Gastrocnemius medialis (tissue), 4 donors: ENCODE measurements at regions of chr6 and their contacts with region 1.

Region 1: DNA sequence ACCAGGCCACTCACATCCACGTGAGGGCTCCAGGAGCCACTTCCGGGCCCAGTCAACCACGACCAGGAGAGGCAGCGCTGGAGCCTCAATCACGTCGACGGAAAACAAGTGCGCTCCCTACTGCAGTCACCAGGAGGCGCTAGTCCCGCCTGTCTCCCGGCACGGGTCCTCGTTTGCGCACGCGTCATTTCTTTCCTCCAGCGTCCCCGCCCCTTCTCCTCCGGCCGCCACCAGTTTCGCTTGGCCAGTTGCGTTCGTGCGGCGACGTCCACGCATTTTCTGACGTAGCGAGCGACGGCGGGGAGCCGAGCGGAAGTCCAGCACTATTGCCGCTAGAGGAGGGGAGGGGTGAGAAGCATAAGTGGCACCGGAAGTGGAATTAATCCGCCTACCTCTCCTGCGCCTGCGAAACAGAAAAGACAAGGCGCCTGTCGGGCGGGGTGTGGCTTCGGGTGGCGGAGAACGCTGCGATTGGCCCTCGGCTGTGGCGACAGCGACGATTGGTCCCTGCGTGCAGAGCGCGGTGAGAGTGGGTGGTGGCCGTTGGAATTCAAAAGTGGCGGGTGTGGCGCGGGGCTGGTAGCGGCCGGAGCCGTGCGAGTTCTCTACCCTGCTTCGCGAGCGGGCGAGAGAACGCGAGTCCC is at the start of gene KIFC1:
- DNase-seq: peak; percentile 98 to 99
- ATAC-seq: peak; percentile 98 to 99
- H3K4me3 ChIP-seq: peak within 1 kb of the TSS; percentile 55 to 65 (median 58)
- H3K27ac ChIP-seq: peak within 1 kb of the TSS; percentile 85 to 96 (median 94)
- H3K4me1 ChIP-seq: peaks cover 4 to 11% of the 10 kb centered on the region in 2 donors
- H3K27me3 ChIP-seq: no peaks in the 10 kb centered on the region
- CTCF ChIP-seq: peak; percentile 96 to 98 (median 96)
- POLR2A ChIP-seq: no peak
- total RNA-seq, gene KIFC1: 0.64 to 1.4 TPM in 2 of 4 donors, not detected in the others

Region 2: GRCh38 chr6:33410050-33410710 is 18.8 kb after region 1 on chr6:
- in situ Hi-C with region 1: no loop called
- intact Hi-C with region 1: loop called (anchors 1 kb)
- DNase-seq: peak; percentile 96 to 97
- ATAC-seq: peak; percentile 87 to 88
- H3K4me3 ChIP-seq: peak overlapping the region; percentile 70 to 100 (median 98)
- H3K27ac ChIP-seq: peak overlapping the region; percentile 99 to 100 (median 99)
- H3K4me1 ChIP-seq: peaks cover 9 to 18% of the 10 kb centered on the region in 2 donors
- H3K27me3 ChIP-seq: no peaks in the 10 kb centered on the region
- CTCF ChIP-seq: no peak
- POLR2A ChIP-seq: peak; percentile 54 to 73

Region 3: DNA sequence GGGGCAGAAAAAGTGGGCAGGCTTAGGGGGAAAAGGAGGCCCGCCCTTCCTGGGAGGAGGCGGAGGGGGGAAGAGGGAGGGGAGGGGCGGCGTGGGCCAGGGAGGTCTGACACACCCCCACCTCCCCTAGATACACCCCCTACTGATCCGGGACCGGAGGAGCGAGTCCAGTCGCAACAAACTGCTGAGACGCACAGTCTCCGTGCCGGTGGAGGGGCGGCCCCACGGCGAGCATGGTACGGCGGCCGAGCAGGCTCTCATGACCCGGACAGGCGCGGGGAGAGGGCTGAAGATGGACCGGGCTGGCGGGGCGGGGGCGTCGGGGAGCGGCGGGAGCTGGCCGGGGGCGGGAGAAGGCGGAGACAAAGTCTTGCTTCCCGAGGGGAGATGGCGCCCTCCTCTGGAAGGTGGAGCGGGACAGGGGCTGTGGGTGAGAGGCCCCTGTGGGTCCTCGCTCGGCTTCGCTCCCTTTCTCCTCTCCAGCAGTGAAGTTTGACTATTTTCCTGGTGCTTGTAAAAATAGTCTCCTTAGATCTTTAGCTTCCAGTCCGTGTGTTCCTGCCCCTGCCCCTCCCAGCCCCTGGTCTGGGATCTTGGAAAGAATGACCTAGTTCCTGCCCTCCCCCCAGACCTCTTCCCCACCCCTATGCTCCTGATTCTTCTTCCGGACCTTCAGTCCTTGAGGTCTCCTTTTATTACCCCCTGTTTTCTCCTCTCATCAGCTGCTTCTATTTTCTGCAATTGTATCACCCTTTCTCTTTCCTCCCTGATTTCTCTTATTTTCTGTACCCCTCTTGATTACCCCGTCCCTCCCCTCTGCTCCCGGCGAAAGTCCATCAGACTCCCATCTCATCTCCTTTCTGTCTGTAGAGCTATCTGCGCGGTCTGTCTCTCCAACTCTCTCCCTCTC is 34.5 kb after region 1 on chr6:
- in situ Hi-C with region 1: no loop called
- intact Hi-C with region 1: loop called (anchors 1 kb)
- DNase-seq: peak; percentile 65 to 71
- ATAC-seq: peak; percentile 59 to 69
- H3K4me3 ChIP-seq: peak overlapping the region; percentile 62 to 79 (median 72)
- H3K27ac ChIP-seq: peak overlapping the region; percentile 83 to 91 (median 90)
- H3K4me1 ChIP-seq: peaks cover 19 to 29% of the 10 kb centered on the region in 2 donors
- H3K27me3 ChIP-seq: no peaks in the 10 kb centered on the region
- CTCF ChIP-seq: peak; percentile 21 to 72 (median 47)
- POLR2A ChIP-seq: peak in 1 of 2 donors; percentile 25

Region 4: GRCh38 chr6:33454009-33454946 is 62.9 kb after region 1 on chr6 and contains the start of gene ZBTB9:
- in situ Hi-C with region 1: loop called in 1 of 4 experiments (anchors 10 kb)
- intact Hi-C with region 1: loop called (anchors 1 kb)
- DNase-seq: peak; percentile 97
- ATAC-seq: peak; percentile 99
- H3K4me3 ChIP-seq: peak within 1 kb of the TSS; percentile 70 to 87 (median 86)
- H3K27ac ChIP-seq: peak within 1 kb of the TSS; percentile 80 to 87 (median 84)
- H3K4me1 ChIP-seq: peaks cover 10 to 18% of the 10 kb centered on the region in 2 donors
- H3K27me3 ChIP-seq: no peaks in the 10 kb centered on the region
- CTCF ChIP-seq: peak in 1 of 5 experiments; percentile 8
- POLR2A ChIP-seq: peak; percentile 69 to 86
- total RNA-seq, gene ZBTB9: 0.82 to 2.2 (median 1.2) TPM

Region 5: GRCh38 chr6:33570806-33571636 is 179.6 kb after region 1 on chr6:
- in situ Hi-C with region 1: no loop called
- intact Hi-C with region 1: loop called (anchors 5 kb)
- DNase-seq: peak; percentile 73 to 80
- ATAC-seq: peak; percentile 92
- H3K4me3 ChIP-seq: peak overlapping the region; percentile 81 to 95 (median 94)
- H3K27ac ChIP-seq: peak overlapping the region; percentile 88 to 98 (median 92)
- H3K4me1 ChIP-seq: peaks cover 10 to 12% of the 10 kb centered on the region in 2 donors
- H3K27me3 ChIP-seq: no peaks in the 10 kb centered on the region
- CTCF ChIP-seq: no peak
- POLR2A ChIP-seq: peak in 1 of 2 donors; percentile 37